ENCODE measurements at regions of chr20 and their contacts with region 1.

Region 1: GRCh38 chr20:56392282-56393137 is at the start of gene CSTF1:
- DNase-seq: peak; percentile 99
- H3K4me3 Mint-ChIP-seq: no peak within 1 kb of the TSS
- H3K27ac Mint-ChIP-seq: no peak within 1 kb of the TSS
- H3K4me1 Mint-ChIP-seq: peaks cover 24% of the 10 kb centered on the region
- H3K27me3 Mint-ChIP-seq: no peaks in the 10 kb centered on the region
- CTCF ChIP-seq: no peak
- total RNA-seq, gene CSTF1: 30.1 and 35.1 TPM in 2 replicates

Region 2: DNA sequence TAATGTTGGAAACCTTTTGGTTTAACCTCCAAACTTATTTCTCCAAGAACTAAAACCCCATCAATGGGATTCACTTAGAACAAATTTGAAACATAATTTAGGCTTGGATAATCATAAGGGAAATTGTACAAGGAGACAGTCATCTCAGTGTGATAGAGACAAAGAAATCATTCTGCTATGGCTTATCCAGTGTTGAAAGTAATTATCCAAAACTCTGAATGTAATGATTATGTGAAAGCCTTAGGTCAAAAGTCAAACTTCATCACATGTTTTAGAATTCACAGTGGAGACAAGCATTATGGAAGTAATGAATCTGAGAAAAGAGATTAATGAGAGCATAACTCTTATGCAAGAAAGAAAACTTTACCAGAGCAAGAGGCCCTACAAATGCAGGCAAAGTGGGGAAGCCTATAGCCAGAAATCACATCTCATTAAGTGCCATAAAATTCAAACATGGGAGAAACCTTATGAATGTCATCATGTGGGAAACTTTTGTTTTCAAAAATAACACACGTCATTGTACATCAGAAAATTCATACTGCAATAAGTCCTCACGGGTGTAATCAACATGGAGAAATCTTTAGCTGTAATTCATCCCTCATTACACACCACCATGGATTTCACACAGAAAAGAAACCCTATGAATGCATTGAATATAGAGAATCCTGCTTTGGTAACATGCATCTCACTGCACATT is 123.8 kb before region 1 on chr20:
- CTCF ChIA-PET with region 1: no interaction called
- POLR2A ChIA-PET with region 1: no interaction called
- intact Hi-C with region 1: no loop called
- DNase-seq: no peak
- H3K4me3 Mint-ChIP-seq: no peak overlapping the region
- H3K27ac Mint-ChIP-seq: no peak overlapping the region
- H3K4me1 Mint-ChIP-seq: no peaks in the 10 kb centered on the region
- H3K27me3 Mint-ChIP-seq: peaks cover 73% of the 10 kb centered on the region
- CTCF ChIP-seq: no peak

Region 3: DNA sequence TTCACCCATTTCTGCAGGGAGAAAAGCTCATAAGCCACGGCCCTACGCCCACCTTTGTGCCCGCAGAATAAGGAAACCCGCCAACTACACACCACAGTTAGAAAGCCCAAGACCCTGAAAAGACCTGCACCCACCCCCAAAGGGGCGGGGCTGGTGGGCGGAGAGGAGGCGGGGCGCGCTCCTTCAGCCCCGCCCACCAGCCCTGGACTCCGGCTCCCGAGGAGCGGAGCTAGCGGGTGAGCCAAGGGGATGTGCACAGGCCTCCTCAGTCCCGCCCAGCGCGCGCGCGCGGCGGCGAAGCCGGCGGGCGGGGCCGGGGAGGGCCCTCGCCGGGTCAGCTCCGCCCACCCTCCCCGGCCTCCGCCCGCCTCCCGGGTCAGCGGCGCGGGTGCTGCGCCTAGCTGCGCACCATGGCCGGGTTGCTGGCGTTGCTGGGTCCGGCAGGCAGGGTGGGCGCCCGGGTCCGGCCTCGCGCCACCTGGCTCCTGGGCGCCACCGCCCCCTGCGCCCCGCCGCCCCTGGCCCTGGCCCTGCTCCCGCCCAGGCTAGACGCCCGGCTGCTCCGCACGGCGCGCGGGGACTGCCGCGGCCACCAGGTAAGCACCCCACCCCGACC is 33.8 kb before region 1 on chr20 and contains the start of gene FAM210B:
- CTCF ChIA-PET with region 1: interaction called, 12 read pairs
- POLR2A ChIA-PET with region 1: interaction called, 100 read pairs
- intact Hi-C with region 1: loop called (anchors 2 kb)
- DNase-seq: peak; percentile 90
- H3K4me3 Mint-ChIP-seq: peak within 1 kb of the TSS; percentile 84
- H3K27ac Mint-ChIP-seq: peak within 1 kb of the TSS; percentile 30
- H3K4me1 Mint-ChIP-seq: peaks cover 11% of the 10 kb centered on the region
- H3K27me3 Mint-ChIP-seq: no peaks in the 10 kb centered on the region
- CTCF ChIP-seq: no peak
- total RNA-seq, gene FAM210B: 37.7 and 38.2 TPM in 2 replicates

Region 4: GRCh38 chr20:56380375-56380774 is 12.1 kb before region 1 on chr20:
- CTCF ChIA-PET with region 1: interaction called, 30 read pairs
- POLR2A ChIA-PET with region 1: interaction called, 32 read pairs
- intact Hi-C with region 1: no loop called
- DNase-seq: no peak
- H3K4me3 Mint-ChIP-seq: no peak overlapping the region
- H3K27ac Mint-ChIP-seq: no peak overlapping the region
- H3K4me1 Mint-ChIP-seq: peaks cover 17% of the 10 kb centered on the region
- H3K27me3 Mint-ChIP-seq: no peaks in the 10 kb centered on the region
- CTCF ChIP-seq: no peak

Region 5: GRCh38 chr20:56414842-56415765 is 22.6 kb after region 1 on chr20:
- CTCF ChIA-PET with region 1: interaction called, 12 read pairs
- POLR2A ChIA-PET with region 1: interaction called, 5 read pairs
- intact Hi-C with region 1: no loop called
- DNase-seq: no peak
- H3K4me3 Mint-ChIP-seq: no peak overlapping the region
- H3K27ac Mint-ChIP-seq: no peak overlapping the region
- H3K4me1 Mint-ChIP-seq: no peaks in the 10 kb centered on the region
- H3K27me3 Mint-ChIP-seq: no peaks in the 10 kb centered on the region
- CTCF ChIP-seq: no peak

Region 6: GRCh38 chr20:56429502-56429901 is 37.0 kb after region 1 on chr20:
- CTCF ChIA-PET with region 1: no interaction called
- POLR2A ChIA-PET with region 1: no interaction called
- intact Hi-C with region 1: no loop called
- DNase-seq: no peak
- H3K4me3 Mint-ChIP-seq: no peak overlapping the region
- H3K27ac Mint-ChIP-seq: no peak overlapping the region
- H3K4me1 Mint-ChIP-seq: peaks cover 19% of the 10 kb centered on the region
- H3K27me3 Mint-ChIP-seq: peaks cover 14% of the 10 kb centered on the region
- CTCF ChIP-seq: no peak

Region 7: DNA sequence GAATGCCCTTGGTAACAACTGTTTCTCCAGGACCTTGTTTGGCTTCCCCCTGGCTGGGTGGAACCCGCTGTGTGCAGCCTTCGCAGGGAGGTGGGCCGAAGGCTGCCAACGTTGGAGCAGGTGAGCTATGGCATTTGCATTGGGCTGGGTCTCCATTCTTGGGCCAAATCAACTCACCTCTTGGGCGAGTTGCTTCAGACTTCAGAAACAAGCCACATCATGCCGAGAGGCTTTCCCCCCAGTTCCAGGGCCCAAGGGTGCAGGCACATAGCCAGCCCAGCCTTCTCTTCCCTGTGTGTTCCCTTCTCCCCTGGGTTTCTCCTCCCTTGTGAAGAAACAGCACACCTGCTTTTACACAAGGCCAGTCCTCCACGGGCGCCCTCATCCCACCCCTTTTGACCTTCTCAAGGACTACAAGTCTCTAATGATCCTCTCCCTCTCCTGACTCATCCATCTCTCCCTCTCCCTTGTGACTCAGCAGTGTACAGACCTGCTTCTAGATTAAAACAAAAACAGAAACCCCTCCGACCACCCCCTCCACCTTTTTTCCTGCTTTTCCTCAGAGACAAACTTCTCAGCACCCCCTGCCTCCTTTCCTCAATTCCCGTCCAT is 182.1 kb after region 1 on chr20:
- CTCF ChIA-PET with region 1: interaction called, 11 read pairs
- POLR2A ChIA-PET with region 1: interaction called, 7 read pairs
- intact Hi-C with region 1: no loop called
- DNase-seq: peak; percentile 92
- H3K4me3 Mint-ChIP-seq: no peak overlapping the region
- H3K27ac Mint-ChIP-seq: peak overlapping the region; percentile 71
- H3K4me1 Mint-ChIP-seq: peaks cover 18% of the 10 kb centered on the region
- H3K27me3 Mint-ChIP-seq: no peaks in the 10 kb centered on the region
- CTCF ChIP-seq: no peak

Measured in MCF 10A (cell line).